ENCODE measurements at regions of chr21 and their contacts with region 1.

Region 1: GRCh38 chr21:34614633-34615486 is at the start of gene RCAN1:
- DNase-seq: peak; percentile 93 to 96 (median 94)
- H3K4me3 ChIP-seq: peak within 1 kb of the TSS; percentile 50 to 86 (median 78)
- H3K4me3 Mint-ChIP-seq: peak within 1 kb of the TSS; percentile 85 to 90
- H3K27ac ChIP-seq: peak within 1 kb of the TSS in 1 of 2 donors; percentile 81
- H3K27ac Mint-ChIP-seq: peak within 1 kb of the TSS; percentile 63 to 89 (median 82)
- H3K4me1 ChIP-seq: peaks cover 41 to 57% of the 10 kb centered on the region in 2 donors
- H3K4me1 Mint-ChIP-seq: peaks cover 54% of the 10 kb centered on the region
- H3K27me3 ChIP-seq: no peaks in the 10 kb centered on the region
- H3K27me3 Mint-ChIP-seq: peaks cover 0 to 3% (median 1%) of the 10 kb centered on the region in 3 donors
- CTCF ChIP-seq: no peak
- polyA plus RNA-seq, gene RCAN1: 5.2 to 17.5 (median 15.1) TPM

Region 2: GRCh38 chr21:33915368-33916199 is 699.3 kb before region 1 on chr21 and contains the start of gene ATP5PO:
- intact Hi-C with region 1: loop called (anchors 5 to 10 kb)
- DNase-seq: peak; percentile 94 to 99 (median 95)
- H3K4me3 ChIP-seq: peak within 1 kb of the TSS; percentile 63 to 91 (median 90)
- H3K4me3 Mint-ChIP-seq: peak within 1 kb of the TSS; percentile 96 to 99
- H3K27ac ChIP-seq: peak within 1 kb of the TSS; percentile 65 to 95
- H3K27ac Mint-ChIP-seq: peak within 1 kb of the TSS; percentile 87 to 99 (median 97)
- H3K4me1 ChIP-seq: peaks cover 12 to 19% of the 10 kb centered on the region in 2 donors
- H3K4me1 Mint-ChIP-seq: peaks cover 16% of the 10 kb centered on the region
- H3K27me3 ChIP-seq: no peaks in the 10 kb centered on the region
- H3K27me3 Mint-ChIP-seq: peaks cover 0 to 4% (median 4%) of the 10 kb centered on the region in 3 donors
- CTCF ChIP-seq: no peak
- polyA plus RNA-seq, gene ATP5PO: 153 to 397 (median 393) TPM